SK-N-SH (cell line): ENCODE measurements at regions of chr2 and their contacts with region 1.

Region 1: DNA sequence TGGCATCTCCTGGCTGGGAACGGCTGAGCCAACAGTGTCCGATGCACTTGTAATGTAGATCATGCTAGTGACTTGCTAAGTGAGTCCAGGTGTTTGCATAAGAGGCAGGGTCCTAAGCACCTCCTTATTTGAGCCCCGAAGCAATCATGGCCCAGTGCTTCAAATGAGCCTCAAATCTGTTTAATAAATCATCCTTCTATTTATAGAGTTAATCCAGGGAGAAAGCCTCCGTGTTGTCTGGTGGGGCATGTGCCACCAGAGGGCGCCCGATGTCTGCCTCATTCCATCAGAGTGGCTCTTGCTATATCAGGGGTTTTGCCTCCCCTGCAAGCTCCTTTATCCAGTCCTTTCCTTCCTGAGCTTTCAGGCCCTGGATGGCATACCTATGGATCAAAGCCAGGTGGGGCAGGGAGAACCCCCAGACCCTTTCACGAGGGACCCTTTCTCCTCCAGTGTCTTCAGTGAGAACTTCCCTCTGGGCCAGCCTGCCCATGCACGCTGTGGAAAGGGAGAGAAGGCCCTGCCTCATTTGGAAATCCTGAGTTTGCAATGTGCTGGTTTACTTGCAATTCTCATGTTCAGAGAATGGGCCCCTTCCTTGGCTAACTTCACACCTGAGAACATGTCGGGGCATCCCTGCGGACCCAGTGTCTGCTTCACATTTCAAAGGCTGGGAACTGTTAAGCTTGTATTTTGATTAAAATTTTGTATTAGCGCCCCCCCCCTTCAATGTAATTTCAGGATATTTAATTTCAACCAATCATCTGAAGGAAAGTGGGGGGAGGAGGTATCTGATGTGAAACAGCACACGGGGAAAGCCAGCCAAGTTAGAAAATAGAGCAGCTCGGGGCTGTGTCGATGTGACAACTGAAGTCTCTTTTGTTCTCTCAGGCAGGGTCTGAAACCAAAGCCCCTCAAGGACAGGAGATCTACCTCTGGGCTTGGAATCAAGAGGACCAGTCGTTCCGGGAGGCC is 39.7 kb downstream of the RDH14 start:
- DNase-seq: peak; percentile 84
- H3K4me3 ChIP-seq: no peak overlapping the region; a peak in 1 of 4 replicates
- H3K27ac ChIP-seq: peak overlapping the region; percentile 57 to 67
- H3K4me1 ChIP-seq: peaks cover 27 to 33% of the 10 kb centered on the region in 2 experiments
- H3K27me3 ChIP-seq: no peaks in the 10 kb centered on the region
- CTCF ChIP-seq: peak; percentile 99
- EP300 ChIP-seq: peak in 1 of 2 experiments; percentile 39; a peak in 1 of 4 replicates
- RAD21 ChIP-seq: peak; percentile 100

Region 2: GRCh38 chr2:18500333-18500732 is 20.4 kb before region 1 on chr2:
- CTCF ChIA-PET with region 1: interaction called, 29 read pairs
- POLR2A ChIA-PET with region 1: no interaction called
- DNase-seq: no peak
- H3K4me3 ChIP-seq: no peak overlapping the region
- H3K27ac ChIP-seq: no peak overlapping the region
- H3K4me1 ChIP-seq: no peaks in the 10 kb centered on the region; a peak in 1 of 4 replicates
- H3K27me3 ChIP-seq: no peaks in the 10 kb centered on the region
- CTCF ChIP-seq: no peak
- EP300 ChIP-seq: no peak
- RAD21 ChIP-seq: no peak

Region 3: GRCh38 chr2:18545384-18545783 is 24.6 kb after region 1 on chr2:
- CTCF ChIA-PET with region 1: interaction called, 12 read pairs
- POLR2A ChIA-PET with region 1: no interaction called
- DNase-seq: no peak
- H3K4me3 ChIP-seq: no peak overlapping the region
- H3K27ac ChIP-seq: peak overlapping the region in 1 of 2 experiments; percentile 64; a peak in 2 of 4 replicates
- H3K4me1 ChIP-seq: peaks cover 0 to 29% of the 10 kb centered on the region in 2 experiments; a peak in 3 of 4 replicates
- H3K27me3 ChIP-seq: no peaks in the 10 kb centered on the region
- CTCF ChIP-seq: no peak
- EP300 ChIP-seq: peak in 1 of 2 experiments; percentile 60; a peak in 1 of 4 replicates
- RAD21 ChIP-seq: no peak

Region 4: GRCh38 chr2:18605115-18605514 is 84.4 kb after region 1 on chr2:
- CTCF ChIA-PET with region 1: interaction called, 19 read pairs
- POLR2A ChIA-PET with region 1: no interaction called
- DNase-seq: no peak
- H3K4me3 ChIP-seq: no peak overlapping the region
- H3K27ac ChIP-seq: peak overlapping the region; percentile 11 to 97; a peak in 3 of 4 replicates
- H3K4me1 ChIP-seq: peaks cover 7 to 24% of the 10 kb centered on the region in 2 experiments
- H3K27me3 ChIP-seq: no peaks in the 10 kb centered on the region
- CTCF ChIP-seq: no peak
- EP300 ChIP-seq: no peak
- RAD21 ChIP-seq: no peak

Region 5: DNA sequence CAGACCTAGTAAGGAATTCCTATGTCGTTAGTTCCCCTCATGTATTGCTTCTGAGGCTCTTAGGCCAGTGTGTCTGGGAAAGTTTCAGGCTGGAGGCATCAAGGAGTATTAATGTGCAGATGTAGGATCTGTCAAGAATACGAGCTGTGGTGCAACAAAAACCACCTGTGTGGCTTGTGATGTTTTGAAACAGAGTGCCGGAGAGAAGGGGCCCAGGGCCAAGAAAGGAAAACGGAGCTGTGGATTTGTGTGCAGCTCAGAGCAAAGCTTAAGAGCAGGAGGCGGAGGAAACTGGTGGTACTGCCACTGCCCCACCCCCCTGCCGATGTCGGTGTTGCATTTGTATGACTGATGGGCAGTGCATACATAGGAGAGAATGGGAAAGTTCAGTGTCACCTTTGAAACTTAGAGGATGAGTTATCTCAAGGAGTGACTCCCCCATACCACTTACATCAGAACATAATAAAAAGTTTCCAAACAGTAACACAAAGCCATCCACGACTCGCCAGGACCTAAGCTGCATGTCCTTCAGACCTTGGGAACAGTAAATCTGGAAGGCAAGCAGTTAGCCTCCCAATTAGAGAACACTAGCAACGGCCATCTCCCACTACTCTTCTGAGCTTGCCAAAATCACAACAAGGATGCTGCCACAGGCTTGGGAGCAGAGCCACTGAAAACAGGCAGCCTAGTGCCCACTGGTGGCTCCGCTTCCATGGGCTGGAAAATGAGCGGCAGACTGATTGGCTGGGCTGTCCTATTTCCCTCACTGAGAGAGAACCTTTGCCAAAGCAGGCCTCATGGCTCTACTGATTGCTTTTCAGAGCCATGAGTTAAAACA is 221.4 kb after region 1 on chr2:
- CTCF ChIA-PET with region 1: interaction called, 59 read pairs
- POLR2A ChIA-PET with region 1: no interaction called
- DNase-seq: peak; percentile 25
- H3K4me3 ChIP-seq: no peak overlapping the region
- H3K27ac ChIP-seq: no peak overlapping the region
- H3K4me1 ChIP-seq: no peaks in the 10 kb centered on the region; a peak in 1 of 4 replicates
- H3K27me3 ChIP-seq: no peaks in the 10 kb centered on the region
- CTCF ChIP-seq: 0 out of 2 replicates have a peak, but pooled peaks have one; percentile 8
- EP300 ChIP-seq: no peak
- RAD21 ChIP-seq: peak; percentile 60

Region 6: GRCh38 chr2:19362755-19363473 is 842.2 kb after region 1 on chr2:
- CTCF ChIA-PET with region 1: interaction called, 111 read pairs
- POLR2A ChIA-PET with region 1: no interaction called
- DNase-seq: peak; percentile 91
- H3K4me3 ChIP-seq: peak overlapping the region; percentile 66 to 76
- H3K27ac ChIP-seq: peak overlapping the region; percentile 52 to 59; a peak in 3 of 4 replicates
- H3K4me1 ChIP-seq: peaks cover 5 to 19% of the 10 kb centered on the region in 2 experiments; a peak in 1 of 4 replicates
- H3K27me3 ChIP-seq: no peaks in the 10 kb centered on the region
- CTCF ChIP-seq: peak; percentile 98
- EP300 ChIP-seq: peak; percentile 25 to 44; a peak in 1 of 4 replicates
- RAD21 ChIP-seq: peak; percentile 94